PC-9 (cell line): ENCODE measurements at regions of chr11 and their contacts with region 1.

Region 1: DNA sequence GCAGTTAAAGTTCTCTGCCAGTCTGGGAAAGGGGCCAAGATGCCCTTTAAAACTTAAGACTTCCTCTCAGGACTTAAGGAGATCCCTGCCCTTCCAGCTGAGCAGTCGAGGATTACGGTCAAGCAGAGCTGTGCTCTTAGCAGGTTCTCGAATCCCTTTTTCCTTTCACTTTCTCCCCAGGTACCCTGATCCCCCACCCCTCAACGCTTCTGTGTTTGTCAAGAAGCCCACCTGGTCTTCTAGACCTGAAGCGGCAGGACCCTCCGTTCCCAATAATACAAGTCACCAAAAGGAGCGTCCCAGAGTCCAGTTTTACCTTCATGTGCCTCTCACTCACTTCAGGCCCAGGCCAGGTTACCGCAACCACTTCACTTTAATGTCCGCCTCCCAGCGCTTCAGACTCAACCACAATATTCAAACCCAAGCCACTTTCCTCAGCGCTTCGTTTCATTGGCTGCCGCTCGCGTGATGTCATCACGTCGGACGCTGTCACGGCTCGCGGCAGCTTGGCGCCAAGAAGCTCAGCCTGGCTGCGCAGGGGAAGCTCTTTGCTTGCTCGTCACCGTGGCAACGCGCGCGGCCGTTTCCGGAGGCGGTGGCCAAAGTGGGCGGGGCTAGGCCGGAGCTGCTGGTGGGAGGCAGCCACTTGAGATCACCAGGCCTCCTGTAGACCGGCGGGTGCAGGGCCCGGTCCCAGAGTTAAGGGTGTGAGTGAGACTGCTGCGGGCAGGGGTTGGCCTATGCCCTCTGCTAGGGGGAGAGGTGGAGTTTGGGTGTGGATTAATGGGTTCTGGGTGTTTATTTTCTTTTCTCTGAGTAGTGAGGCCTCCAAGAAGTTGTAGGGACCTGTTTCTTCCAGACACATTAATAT is at the starts of genes KIF18A and METTL15:
- DNase-seq: peak; percentile 97 to 99
- H3K4me3 ChIP-seq: peak within 1 kb of the TSS; percentile 93
- H3K27ac ChIP-seq: peak within 1 kb of the TSS; percentile 61
- H3K4me1 ChIP-seq: peaks cover 48% of the 10 kb centered on the region
- H3K27me3 ChIP-seq: no peaks in the 10 kb centered on the region
- CTCF ChIP-seq: no peak
- total RNA-seq, gene KIF18A: 22.9 and 31.1 TPM in 2 replicates
- total RNA-seq, gene METTL15: 17.9 and 19.9 TPM in 2 replicates

Region 2: DNA sequence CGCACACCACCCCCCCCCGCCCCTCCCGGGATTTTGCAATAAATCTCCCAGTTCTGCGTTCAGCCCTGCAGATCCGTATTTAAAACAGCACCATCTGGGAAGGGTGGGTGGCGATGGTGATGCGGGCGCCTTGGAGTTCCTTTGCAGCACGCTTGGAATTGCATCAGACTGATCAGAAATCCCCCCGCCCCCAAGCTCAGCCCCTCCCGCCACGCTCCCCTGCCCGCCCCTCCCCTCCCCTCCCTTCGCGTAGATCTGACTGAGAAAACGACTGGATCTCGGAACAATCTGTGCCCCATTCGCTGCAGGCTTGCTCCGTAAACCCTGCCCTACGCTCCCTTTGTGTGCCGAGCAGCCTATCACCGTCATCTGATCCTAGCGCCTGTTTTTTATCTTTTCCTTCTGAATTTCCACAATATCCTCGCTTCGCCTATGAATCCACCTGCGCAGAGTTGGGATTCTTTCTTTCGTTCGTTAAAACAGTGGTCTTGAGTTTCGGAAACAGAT is 389.6 kb before region 1 on chr11:
- CTCF ChIA-PET with region 1: interaction called, 11 read pairs
- POLR2A ChIA-PET with region 1: no interaction called
- intact Hi-C with region 1: no loop called
- DNase-seq: peak in 1 of 2 experiments; percentile 55
- H3K4me3 ChIP-seq: peak overlapping the region; percentile 58
- H3K27ac ChIP-seq: peak overlapping the region; percentile 68
- H3K4me1 ChIP-seq: 0 out of 2 replicates have a peak, but pooled peaks cover 7% of the 10 kb centered on the region
- H3K27me3 ChIP-seq: no peaks in the 10 kb centered on the region
- CTCF ChIP-seq: no peak

Region 3: DNA sequence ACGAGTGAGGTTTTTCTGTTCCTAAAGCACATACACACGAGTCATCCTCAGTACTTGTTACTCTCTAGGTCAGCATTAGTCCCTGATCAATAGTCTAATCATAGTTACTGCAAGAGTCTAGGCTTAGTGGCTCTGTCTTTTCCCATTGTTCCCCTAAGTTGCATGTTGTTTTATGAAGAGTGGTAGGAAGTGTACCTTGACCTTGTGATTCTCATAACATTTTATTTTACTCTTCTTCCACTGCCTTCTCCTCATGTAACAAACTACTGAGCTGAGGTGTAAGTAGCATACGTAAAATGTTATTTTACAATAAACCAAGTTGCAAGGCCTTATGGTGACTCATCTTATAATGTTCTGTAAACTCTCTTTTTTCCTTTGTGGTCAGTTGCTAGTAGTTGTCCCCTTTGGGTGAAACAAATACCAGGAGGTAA is 15.2 kb after region 1 on chr11:
- CTCF ChIA-PET with region 1: no interaction called
- POLR2A ChIA-PET with region 1: interaction called, 10 read pairs
- intact Hi-C with region 1: no loop called
- DNase-seq: no peak
- H3K4me3 ChIP-seq: no peak overlapping the region
- H3K27ac ChIP-seq: no peak overlapping the region
- H3K4me1 ChIP-seq: no peaks in the 10 kb centered on the region
- H3K27me3 ChIP-seq: no peaks in the 10 kb centered on the region
- CTCF ChIP-seq: no peak

Region 4: GRCh38 chr11:28343276-28344233 is 235.6 kb after region 1 on chr11:
- CTCF ChIA-PET with region 1: no interaction called
- POLR2A ChIA-PET with region 1: no interaction called
- intact Hi-C with region 1: loop called (anchors 10 kb)
- DNase-seq: peak; percentile 38 to 61
- H3K4me3 ChIP-seq: no peak overlapping the region
- H3K27ac ChIP-seq: peak overlapping the region; percentile 81
- H3K4me1 ChIP-seq: peaks cover 37% of the 10 kb centered on the region
- H3K27me3 ChIP-seq: no peaks in the 10 kb centered on the region
- CTCF ChIP-seq: no peak

Region 5: GRCh38 chr11:28596816-28597215 is 488.8 kb after region 1 on chr11:
- CTCF ChIA-PET with region 1: no interaction called
- POLR2A ChIA-PET with region 1: no interaction called
- intact Hi-C with region 1: no loop called
- DNase-seq: no peak
- H3K4me3 ChIP-seq: no peak overlapping the region
- H3K27ac ChIP-seq: no peak overlapping the region
- H3K4me1 ChIP-seq: no peaks in the 10 kb centered on the region
- H3K27me3 ChIP-seq: no peaks in the 10 kb centered on the region
- CTCF ChIP-seq: no peak

Region 6: GRCh38 chr11:28836285-28837081 is 728.5 kb after region 1 on chr11:
- CTCF ChIA-PET with region 1: interaction called, 3 read pairs
- POLR2A ChIA-PET with region 1: interaction called, 3 read pairs
- intact Hi-C with region 1: loop called (anchors 2 kb)
- DNase-seq: peak; percentile 35 to 61
- H3K4me3 ChIP-seq: no peak overlapping the region
- H3K27ac ChIP-seq: peak overlapping the region; percentile 43; the same call in 1 of the 2 replicates
- H3K4me1 ChIP-seq: 0 out of 2 replicates have a peak, but pooled peaks cover 10% of the 10 kb centered on the region
- H3K27me3 ChIP-seq: no peaks in the 10 kb centered on the region
- CTCF ChIP-seq: no peak